Natural killer cell (primary cell): ENCODE measurements at regions of chr6 and their contacts with region 1.

Region 1: DNA sequence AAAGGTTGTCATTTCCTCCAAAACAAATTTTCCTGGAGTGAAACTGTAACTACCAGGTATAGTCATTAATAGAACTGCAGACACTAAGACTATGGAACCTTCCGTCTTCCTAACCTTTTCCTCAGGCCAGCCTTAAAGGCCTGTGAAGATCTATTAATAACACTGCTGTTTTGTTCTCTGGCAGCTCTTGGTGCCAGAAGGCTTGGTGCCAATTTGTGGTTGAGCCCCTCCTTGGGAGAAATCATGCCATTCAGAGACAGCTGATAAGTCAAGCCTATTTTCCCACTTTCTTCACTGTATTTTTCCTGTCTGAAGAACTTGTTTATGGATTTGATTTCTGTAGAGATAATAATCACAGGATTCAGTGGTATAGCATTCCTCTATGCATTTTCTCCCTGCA is 64.8 kb downstream of the HCRTR2 start:
- DNase-seq: no peak
- ATAC-seq: no peak
- H3K4me3 ChIP-seq: no peak overlapping the region
- H3K4me3 Mint-ChIP-seq: no peak overlapping the region
- H3K27ac ChIP-seq: no peak overlapping the region
- H3K27ac Mint-ChIP-seq: no peak overlapping the region
- H3K4me1 ChIP-seq: no peaks in the 10 kb centered on the region
- H3K4me1 Mint-ChIP-seq: no peaks in the 10 kb centered on the region
- H3K27me3 ChIP-seq: no peaks in the 10 kb centered on the region
- H3K27me3 Mint-ChIP-seq: peaks cover 0 to 3% of the 10 kb centered on the region in 2 donors
- CTCF ChIP-seq: no peak

Region 2: GRCh38 chr6:54717849-54718455 is 521.1 kb before region 1 on chr6:
- intact Hi-C with region 1: loop called (anchors 5 kb)
- DNase-seq: peak; percentile 44 to 56
- ATAC-seq: peak; percentile 63 to 80 (median 64)
- H3K4me3 ChIP-seq: no peak overlapping the region
- H3K4me3 Mint-ChIP-seq: no peak overlapping the region
- H3K27ac ChIP-seq: no peak overlapping the region
- H3K27ac Mint-ChIP-seq: no peak overlapping the region
- H3K4me1 ChIP-seq: no peaks in the 10 kb centered on the region
- H3K4me1 Mint-ChIP-seq: no peaks in the 10 kb centered on the region
- H3K27me3 ChIP-seq: no peaks in the 10 kb centered on the region
- H3K27me3 Mint-ChIP-seq: peaks cover 3 to 7% of the 10 kb centered on the region in 2 donors
- CTCF ChIP-seq: peak; percentile 91

Region 3: GRCh38 chr6:56268266-56268665 is 1029.2 kb after region 1 on chr6:
- intact Hi-C with region 1: no loop called
- DNase-seq: no peak
- ATAC-seq: no peak
- H3K4me3 ChIP-seq: no peak overlapping the region
- H3K4me3 Mint-ChIP-seq: no peak overlapping the region
- H3K27ac ChIP-seq: no peak overlapping the region
- H3K27ac Mint-ChIP-seq: no peak overlapping the region
- H3K4me1 ChIP-seq: no peaks in the 10 kb centered on the region
- H3K4me1 Mint-ChIP-seq: no peaks in the 10 kb centered on the region
- H3K27me3 ChIP-seq: no peaks in the 10 kb centered on the region
- H3K27me3 Mint-ChIP-seq: no peaks in the 10 kb centered on the region
- CTCF ChIP-seq: no peak